ENCODE measurements at regions of chr18 and their contacts with region 1.

Region 1: GRCh38 chr18:37364237-37364636 is 201.4 kb downstream of the CELF4 start:
- DNase-seq: peak; percentile 75 to 88
- H3K4me3 ChIP-seq: no peak overlapping the region
- H3K27ac ChIP-seq: peak overlapping the region in 1 of 2 donors; percentile 12
- H3K4me1 ChIP-seq: peaks cover 0 to 16% of the 10 kb centered on the region in 2 donors
- H3K27me3 ChIP-seq: no peaks in the 10 kb centered on the region
- CTCF ChIP-seq: no peak
- POLR2A ChIP-seq: no peak

Region 2: DNA sequence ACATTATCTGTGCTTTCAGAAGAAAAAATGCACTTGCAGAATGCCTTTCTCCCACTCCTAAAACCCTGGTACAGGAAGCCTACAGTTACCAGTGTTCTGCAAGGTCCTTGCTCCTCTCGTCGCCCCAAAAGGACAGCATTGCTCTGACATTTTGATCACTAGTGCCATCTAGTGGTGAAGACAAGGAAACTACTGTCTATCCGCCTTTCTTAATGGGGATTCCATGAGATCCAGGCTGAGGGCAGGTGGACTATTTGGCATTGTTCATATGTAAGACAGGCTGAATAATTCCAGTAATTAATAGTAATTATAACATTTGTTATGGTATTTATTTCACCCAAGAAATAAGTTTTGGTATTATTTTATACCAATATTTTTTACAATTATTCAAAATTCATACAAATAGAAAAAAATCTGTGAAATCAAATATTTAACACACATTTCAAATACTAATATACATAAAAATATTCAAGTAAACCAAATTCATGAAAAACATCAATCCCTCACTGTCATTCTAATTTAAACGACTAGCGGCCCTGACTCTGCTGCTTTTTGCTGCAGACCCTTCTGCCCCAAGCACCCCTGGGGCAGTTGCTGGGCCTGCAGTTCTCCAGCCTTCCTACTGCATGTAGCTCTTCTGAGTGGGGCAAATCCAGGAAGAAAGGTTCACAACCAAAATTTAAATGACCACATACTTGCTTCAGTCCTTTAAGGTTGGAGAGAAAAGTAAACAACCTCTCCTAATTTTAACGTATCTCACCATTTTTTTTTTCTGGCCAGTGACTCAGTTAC is 554.5 kb before region 1 on chr18:
- intact Hi-C with region 1: loop called (anchors 5 kb)
- DNase-seq: peak in 1 of 2 donors; percentile 25
- H3K4me3 ChIP-seq: no peak overlapping the region
- H3K27ac ChIP-seq: no peak overlapping the region
- H3K4me1 ChIP-seq: no peaks in the 10 kb centered on the region
- H3K27me3 ChIP-seq: no peaks in the 10 kb centered on the region
- CTCF ChIP-seq: peak; percentile 54 to 69 (median 69)
- POLR2A ChIP-seq: no peak

Region 3: GRCh38 chr18:38933910-38934510 is 1569.8 kb after region 1 on chr18:
- intact Hi-C with region 1: loop called (anchors 5 kb)
- DNase-seq: no peak
- H3K4me3 ChIP-seq: no peak overlapping the region
- H3K27ac ChIP-seq: no peak overlapping the region
- H3K4me1 ChIP-seq: no peaks in the 10 kb centered on the region
- H3K27me3 ChIP-seq: no peaks in the 10 kb centered on the region
- CTCF ChIP-seq: no peak
- POLR2A ChIP-seq: no peak